Activated naive CD8-positive, alpha-beta T cell treated with anti-CD3 and anti-CD28 coated beads, Interleukin-2, amount 10 ng/mL, durations not matched to agents 7 days and 5 days (primary cell): ENCODE measurements at regions of chr18 and their contacts with region 1.

Region 1: GRCh38 chr18:23586249-23587196 is at the start of gene NPC1:
- DNase-seq: peak; percentile 96
- ATAC-seq: peak; percentile 89
- H3K4me3 Mint-ChIP-seq: peak within 1 kb of the TSS; percentile 94
- H3K27ac Mint-ChIP-seq: peak within 1 kb of the TSS; percentile 98
- H3K4me1 Mint-ChIP-seq: peaks cover 28% of the 10 kb centered on the region
- H3K27me3 Mint-ChIP-seq: peaks cover 13% of the 10 kb centered on the region
- total RNA-seq, gene NPC1: 54.5 to 55.3 TPM

Region 2: GRCh38 chr18:23433360-23433759 is 153.2 kb before region 1 on chr18:
- POLR2A ChIA-PET with region 1: no interaction called
- DNase-seq: no peak
- ATAC-seq: no peak
- H3K4me3 Mint-ChIP-seq: no peak overlapping the region
- H3K27ac Mint-ChIP-seq: no peak overlapping the region
- H3K4me1 Mint-ChIP-seq: peaks cover 10% of the 10 kb centered on the region
- H3K27me3 Mint-ChIP-seq: no peaks in the 10 kb centered on the region

Region 3: DNA sequence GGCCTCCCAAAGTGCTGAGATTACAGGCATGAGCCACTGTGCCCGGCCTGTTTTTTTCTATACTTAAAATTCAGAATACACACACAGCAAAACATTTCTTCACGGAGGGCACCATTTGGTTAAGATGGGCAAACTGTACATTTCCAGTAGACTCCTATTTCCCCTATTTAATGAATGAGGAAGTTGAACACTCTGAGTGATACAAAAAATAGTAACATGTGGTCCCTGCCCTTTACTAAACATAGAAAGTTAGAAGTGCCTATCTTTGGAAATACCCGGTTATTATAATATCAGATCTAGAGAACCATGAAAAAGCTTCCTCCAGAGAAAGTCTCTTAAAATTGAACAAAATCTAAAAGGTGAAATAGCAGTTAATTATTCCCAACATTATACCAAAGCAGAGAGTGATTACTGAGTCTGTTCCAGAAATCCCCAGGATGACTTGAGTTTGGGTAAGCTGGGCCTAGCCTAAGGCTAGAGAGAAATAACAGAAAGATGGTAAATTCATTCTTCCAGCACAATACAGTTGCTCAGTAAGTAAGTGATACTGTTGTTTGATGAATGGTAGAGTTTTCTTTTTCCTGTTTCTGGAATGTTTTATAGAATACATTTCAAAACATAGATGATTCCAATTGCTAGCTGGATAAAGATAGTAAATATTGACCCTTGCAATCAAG is 106.6 kb before region 1 on chr18:
- POLR2A ChIA-PET with region 1: no interaction called
- DNase-seq: no peak
- ATAC-seq: no peak
- H3K4me3 Mint-ChIP-seq: no peak overlapping the region
- H3K27ac Mint-ChIP-seq: no peak overlapping the region
- H3K4me1 Mint-ChIP-seq: peaks cover 2% of the 10 kb centered on the region
- H3K27me3 Mint-ChIP-seq: no peaks in the 10 kb centered on the region

Region 4: GRCh38 chr18:23540867-23541266 is 45.7 kb before region 1 on chr18:
- POLR2A ChIA-PET with region 1: interaction called, 10 read pairs
- DNase-seq: no peak
- ATAC-seq: peak; percentile 92
- H3K4me3 Mint-ChIP-seq: peak overlapping the region; percentile 63
- H3K27ac Mint-ChIP-seq: peak overlapping the region; percentile 64
- H3K4me1 Mint-ChIP-seq: peaks cover 36% of the 10 kb centered on the region
- H3K27me3 Mint-ChIP-seq: no peaks in the 10 kb centered on the region

Region 5: GRCh38 chr18:23550898-23551297 is 35.6 kb before region 1 on chr18:
- POLR2A ChIA-PET with region 1: no interaction called
- DNase-seq: no peak
- ATAC-seq: no peak
- H3K4me3 Mint-ChIP-seq: no peak overlapping the region
- H3K27ac Mint-ChIP-seq: no peak overlapping the region
- H3K4me1 Mint-ChIP-seq: peaks cover 7% of the 10 kb centered on the region
- H3K27me3 Mint-ChIP-seq: no peaks in the 10 kb centered on the region